RWPE1 (cell line): ENCODE measurements at regions of chr15 and their contacts with region 1.

Region 1: GRCh38 chr15:60444289-60444912 is 34.5 kb downstream of the ICE2 start:
- DNase-seq: peak; percentile 53
- H3K27ac ChIP-seq: peak overlapping the region; percentile 58
- CTCF ChIP-seq: peak; percentile 83

Region 2: GRCh38 chr15:60397772-60398445 is 46.5 kb before region 1 on chr15 and contains the start of gene ANXA2:
- CTCF ChIA-PET with region 1: interaction called, 7 read pairs
- POLR2A ChIA-PET with region 1: interaction called, 11 read pairs
- DNase-seq: peak; percentile 94
- H3K27ac ChIP-seq: peak within 1 kb of the TSS; percentile 99
- CTCF ChIP-seq: no peak

Region 3: GRCh38 chr15:60458721-60459120 is 14.3 kb after region 1 on chr15:
- CTCF ChIA-PET with region 1: no interaction called
- POLR2A ChIA-PET with region 1: no interaction called
- DNase-seq: no peak
- H3K27ac ChIP-seq: no peak overlapping the region
- CTCF ChIP-seq: no peak